Upper lobe of right lung (tissue), 1 donor: ENCODE measurements at regions of chr10 and their contacts with region 1.

Region 1: GRCh38 chr10:110206995-110207804 is at the start of gene MXI1:
- DNase-seq: peak; percentile 81
- ATAC-seq: peak; percentile 60
- H3K4me3 ChIP-seq: peak within 1 kb of the TSS; percentile 60
- H3K27ac ChIP-seq: peak within 1 kb of the TSS; percentile 85
- H3K4me1 ChIP-seq: peaks cover 14% of the 10 kb centered on the region
- H3K27me3 ChIP-seq: no peaks in the 10 kb centered on the region
- CTCF ChIP-seq: no peak
- total RNA-seq, gene MXI1: 34.7 TPM

Region 2: GRCh38 chr10:110151467-110151866 is 55.7 kb before region 1 on chr10:
- intact Hi-C with region 1: loop called (anchors 10 kb)
- DNase-seq: peak; percentile 71
- ATAC-seq: peak; percentile 73
- H3K4me3 ChIP-seq: no peak overlapping the region
- H3K27ac ChIP-seq: no peak overlapping the region
- H3K4me1 ChIP-seq: no peaks in the 10 kb centered on the region
- H3K27me3 ChIP-seq: peaks cover 2% of the 10 kb centered on the region
- CTCF ChIP-seq: no peak

Region 3: DNA sequence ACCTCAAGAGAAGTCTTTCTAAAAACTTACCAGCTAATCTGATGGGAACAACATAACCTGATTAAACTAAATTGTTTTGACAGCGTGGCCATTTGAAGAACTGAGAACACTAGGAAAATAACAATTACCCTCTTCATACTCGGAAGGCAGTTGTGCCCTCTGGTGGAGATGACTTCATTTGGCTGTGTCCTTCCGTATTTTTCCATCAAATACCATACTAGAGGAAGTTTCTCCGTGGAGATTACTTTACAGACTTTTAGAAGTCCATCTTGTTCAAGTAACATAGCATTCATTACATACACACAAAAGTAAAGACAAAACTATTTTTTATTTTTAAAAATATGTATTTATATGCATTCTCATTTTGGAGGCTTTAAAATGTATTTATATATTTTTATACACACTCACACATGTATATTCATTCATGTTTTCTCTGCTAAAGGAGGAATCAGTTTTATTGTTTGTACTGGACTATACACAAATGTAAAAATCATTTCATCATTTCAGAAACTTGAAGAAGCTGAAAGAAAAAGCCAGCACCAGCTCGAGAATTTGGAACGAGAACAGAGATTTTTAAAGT is 72.3 kb after region 1 on chr10:
- intact Hi-C with region 1: loop called (anchors 10 kb)
- DNase-seq: no peak
- ATAC-seq: peak; percentile 92
- H3K4me3 ChIP-seq: no peak overlapping the region
- H3K27ac ChIP-seq: no peak overlapping the region
- H3K4me1 ChIP-seq: peaks cover 7% of the 10 kb centered on the region
- H3K27me3 ChIP-seq: no peaks in the 10 kb centered on the region
- CTCF ChIP-seq: peak; percentile 71